Naive thymus-derived CD4-positive, alpha-beta T cell (primary cell): ENCODE measurements at regions of chr6 and their contacts with region 1.

Region 1: DNA sequence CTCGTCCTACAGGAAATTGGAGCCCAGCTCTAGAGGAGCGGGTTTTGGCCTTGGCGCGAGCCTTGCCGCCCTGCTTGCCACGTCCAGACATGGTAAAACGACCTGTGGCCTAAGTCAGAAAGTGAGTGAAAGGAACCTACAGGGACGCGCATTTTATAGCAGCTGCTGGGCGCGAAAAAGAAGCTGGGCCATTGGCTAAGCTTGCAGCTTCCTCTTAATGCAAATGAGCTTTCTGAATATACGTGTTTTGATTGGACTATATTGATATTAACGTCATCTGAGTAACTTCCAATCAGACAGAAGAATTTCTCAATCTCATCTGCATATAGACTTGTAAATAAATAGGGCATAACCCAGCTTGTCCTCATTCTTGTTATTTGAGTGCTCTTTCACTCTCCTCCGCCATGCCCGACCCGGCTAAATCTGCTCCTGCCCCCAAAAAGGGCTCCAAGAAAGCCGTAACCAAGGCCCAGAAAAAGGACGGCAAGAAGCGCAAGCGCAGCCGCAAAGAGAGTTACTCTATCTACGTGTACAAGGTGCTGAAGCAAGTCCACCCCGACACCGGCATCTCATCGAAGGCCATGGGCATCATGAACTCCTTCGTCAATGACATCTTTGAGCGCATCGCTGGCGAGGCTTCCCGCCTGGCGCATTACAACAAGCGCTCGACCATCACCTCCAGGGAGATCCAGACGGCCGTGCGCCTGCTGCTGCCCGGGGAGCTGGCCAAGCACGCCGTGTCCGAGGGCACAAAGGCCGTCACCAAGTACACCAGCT is 18.9 kb downstream of the OR2B2 start:
- DNase-seq: peak; percentile 75 to 95 (median 92)
- ATAC-seq: peak; percentile 83
- H3K4me3 ChIP-seq: peak overlapping the region; percentile 72
- H3K4me3 Mint-ChIP-seq: no peak overlapping the region
- H3K27ac ChIP-seq: peak overlapping the region; percentile 82
- H3K27ac Mint-ChIP-seq: peak overlapping the region in 1 of 9 donors; percentile 97
- H3K4me1 ChIP-seq: peaks cover 4 to 20% of the 10 kb centered on the region in 2 donors
- H3K4me1 Mint-ChIP-seq: peaks cover 9 to 55% (median 30%) of the 10 kb centered on the region in 7 donors
- H3K27me3 ChIP-seq: no peaks in the 10 kb centered on the region
- H3K27me3 Mint-ChIP-seq: peaks cover 0 to 8% (median 0%) of the 10 kb centered on the region in 5 donors

Region 2: DNA sequence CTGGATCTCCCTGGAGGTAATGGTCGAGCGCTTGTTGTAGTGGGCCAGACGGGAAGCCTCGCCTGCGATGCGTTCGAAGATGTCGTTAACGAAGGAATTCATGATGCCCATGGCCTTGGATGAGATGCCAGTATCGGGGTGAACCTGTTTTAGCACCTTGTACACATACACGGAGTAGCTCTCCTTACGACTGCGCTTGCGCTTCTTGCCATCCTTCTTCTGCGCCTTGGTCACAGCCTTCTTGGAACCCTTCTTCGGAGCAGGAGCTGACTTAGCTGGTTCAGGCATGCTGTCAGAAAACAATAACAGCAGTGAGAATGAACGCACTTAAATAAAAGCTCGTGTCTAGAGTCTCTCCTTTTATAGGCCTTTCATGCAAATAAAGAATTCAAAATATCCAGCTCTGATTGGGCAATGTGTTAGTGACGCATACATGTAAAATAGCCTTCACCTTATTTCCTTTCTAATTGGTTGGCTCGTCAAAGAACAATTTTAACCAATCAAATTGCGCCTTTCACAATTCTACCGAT is 1676.8 kb before region 1 on chr6:
- CTCF ChIA-PET with region 1: no interaction called
- POLR2A ChIA-PET with region 1: interaction called, 18 read pairs
- intact Hi-C with region 1: no loop called
- DNase-seq: peak; percentile 56 to 97 (median 93)
- ATAC-seq: peak; percentile 86
- H3K4me3 ChIP-seq: peak overlapping the region; percentile 72
- H3K4me3 Mint-ChIP-seq: no peak overlapping the region
- H3K27ac ChIP-seq: peak overlapping the region; percentile 84
- H3K27ac Mint-ChIP-seq: no peak overlapping the region
- H3K4me1 ChIP-seq: peaks cover 12 to 18% of the 10 kb centered on the region in 2 donors
- H3K4me1 Mint-ChIP-seq: peaks cover 3 to 31% (median 10%) of the 10 kb centered on the region in 7 donors
- H3K27me3 ChIP-seq: no peaks in the 10 kb centered on the region
- H3K27me3 Mint-ChIP-seq: no peaks in the 10 kb centered on the region

Region 3: GRCh38 chr6:27132532-27133280 is 760.5 kb before region 1 on chr6:
- CTCF ChIA-PET with region 1: no interaction called
- POLR2A ChIA-PET with region 1: interaction called, 94 read pairs
- intact Hi-C with region 1: loop called (anchors 1 kb)
- DNase-seq: peak; percentile 73 to 99 (median 97)
- ATAC-seq: peak; percentile 93
- H3K4me3 ChIP-seq: peak overlapping the region; percentile 90
- H3K4me3 Mint-ChIP-seq: no peak overlapping the region
- H3K27ac ChIP-seq: peak overlapping the region; percentile 81
- H3K27ac Mint-ChIP-seq: no peak overlapping the region
- H3K4me1 ChIP-seq: peaks cover 10 to 18% of the 10 kb centered on the region in 2 donors
- H3K4me1 Mint-ChIP-seq: peaks cover 6 to 49% (median 21%) of the 10 kb centered on the region in 7 donors
- H3K27me3 ChIP-seq: no peaks in the 10 kb centered on the region
- H3K27me3 Mint-ChIP-seq: no peaks in the 10 kb centered on the region

Region 4: GRCh38 chr6:27312146-27312949 is 580.9 kb before region 1 on chr6 and contains the start of gene POM121L2:
- CTCF ChIA-PET with region 1: interaction called, 6 read pairs
- POLR2A ChIA-PET with region 1: interaction called, 3 read pairs
- intact Hi-C with region 1: loop called (anchors 1 to 2 kb)
- DNase-seq: peak in 8 of 9 donors; percentile 26 to 61 (median 56)
- ATAC-seq: peak; percentile 66
- H3K4me3 ChIP-seq: peak within 1 kb of the TSS; percentile 80
- H3K4me3 Mint-ChIP-seq: peak within 1 kb of the TSS; percentile 76 to 86 (median 83)
- H3K27ac ChIP-seq: no peak within 1 kb of the TSS
- H3K27ac Mint-ChIP-seq: peak within 1 kb of the TSS in 2 of 9 donors; percentile 15 to 25
- H3K4me1 ChIP-seq: peaks cover 0 to 6% of the 10 kb centered on the region in 2 donors
- H3K4me1 Mint-ChIP-seq: peaks cover 0 to 13% (median 4%) of the 10 kb centered on the region in 7 donors
- H3K27me3 ChIP-seq: peaks cover 4 to 14% of the 10 kb centered on the region in 2 donors
- H3K27me3 Mint-ChIP-seq: peaks cover 63 to 81% (median 73%) of the 10 kb centered on the region in 5 donors
- total RNA-seq, gene POM121L2: not detected

Region 5: GRCh38 chr6:27795697-27796494 is 97.4 kb before region 1 on chr6:
- CTCF ChIA-PET with region 1: interaction called, 79 read pairs
- POLR2A ChIA-PET with region 1: interaction called, 21 read pairs
- intact Hi-C with region 1: loop called (anchors 1 kb)
- DNase-seq: peak in 8 of 9 donors; percentile 36 to 83 (median 78)
- ATAC-seq: peak; percentile 86
- H3K4me3 ChIP-seq: no peak overlapping the region
- H3K4me3 Mint-ChIP-seq: peak overlapping the region in 2 of 10 donors; percentile 30 to 42
- H3K27ac ChIP-seq: no peak overlapping the region
- H3K27ac Mint-ChIP-seq: peak overlapping the region in 6 of 9 donors; percentile 11 to 86 (median 38)
- H3K4me1 ChIP-seq: peaks cover 14 to 24% of the 10 kb centered on the region in 2 donors
- H3K4me1 Mint-ChIP-seq: peaks cover 12 to 49% (median 22%) of the 10 kb centered on the region in 7 donors
- H3K27me3 ChIP-seq: no peaks in the 10 kb centered on the region
- H3K27me3 Mint-ChIP-seq: peaks cover 7 to 13% (median 12%) of the 10 kb centered on the region in 5 donors

Region 6: GRCh38 chr6:28355743-28356665 is 462.8 kb after region 1 on chr6:
- CTCF ChIA-PET with region 1: no interaction called
- POLR2A ChIA-PET with region 1: interaction called, 3 read pairs
- intact Hi-C with region 1: loop called in 1 of 2 experiments (anchors 2 kb)
- DNase-seq: peak; percentile 26 to 69 (median 54)
- ATAC-seq: peak; percentile 92
- H3K4me3 ChIP-seq: peak overlapping the region; percentile 69
- H3K4me3 Mint-ChIP-seq: peak overlapping the region; percentile 78 to 96 (median 92)
- H3K27ac ChIP-seq: no peak overlapping the region
- H3K27ac Mint-ChIP-seq: peak overlapping the region; percentile 21 to 89 (median 62)
- H3K4me1 ChIP-seq: peaks cover 0 to 7% of the 10 kb centered on the region in 2 donors
- H3K4me1 Mint-ChIP-seq: peaks cover 16 to 38% (median 34%) of the 10 kb centered on the region in 7 donors
- H3K27me3 ChIP-seq: no peaks in the 10 kb centered on the region
- H3K27me3 Mint-ChIP-seq: no peaks in the 10 kb centered on the region